ENCODE measurements at regions of chr2 and their contacts with region 1.

Region 1: GRCh38 chr2:95728878-95729596 is 137.2 kb downstream of the TRIM43 start:
- DNase-seq: peak; percentile 78
- H3K4me3 Mint-ChIP-seq: no peak overlapping the region
- H3K27ac Mint-ChIP-seq: peak overlapping the region; percentile 3
- H3K4me1 Mint-ChIP-seq: peaks cover 8% of the 10 kb centered on the region
- H3K27me3 Mint-ChIP-seq: peaks cover 31% of the 10 kb centered on the region
- CTCF ChIP-seq: peak; percentile 50

Region 2: GRCh38 chr2:95231723-95232122 is 497.3 kb before region 1 on chr2:
- CTCF ChIA-PET with region 1: no interaction called
- intact Hi-C with region 1: loop called (anchors 2 kb)
- DNase-seq: peak; percentile 75
- H3K4me3 Mint-ChIP-seq: no peak overlapping the region
- H3K27ac Mint-ChIP-seq: no peak overlapping the region
- H3K4me1 Mint-ChIP-seq: no peaks in the 10 kb centered on the region
- H3K27me3 Mint-ChIP-seq: no peaks in the 10 kb centered on the region
- CTCF ChIP-seq: peak; percentile 88

Region 3: GRCh38 chr2:95345566-95346230 is 383.3 kb before region 1 on chr2:
- CTCF ChIA-PET with region 1: no interaction called
- intact Hi-C with region 1: loop called (anchors 10 kb)
- DNase-seq: peak; percentile 93
- H3K4me3 Mint-ChIP-seq: peak overlapping the region; percentile 78
- H3K27ac Mint-ChIP-seq: no peak overlapping the region
- H3K4me1 Mint-ChIP-seq: peaks cover 8% of the 10 kb centered on the region
- H3K27me3 Mint-ChIP-seq: peaks cover 30% of the 10 kb centered on the region
- CTCF ChIP-seq: peak; percentile 85

Region 4: GRCh38 chr2:95526360-95527341 is 202.4 kb before region 1 on chr2:
- CTCF ChIA-PET with region 1: no interaction called
- intact Hi-C with region 1: loop called (anchors 5 kb)
- DNase-seq: peak; percentile 83
- H3K4me3 Mint-ChIP-seq: peak overlapping the region; percentile 94
- H3K27ac Mint-ChIP-seq: peak overlapping the region; percentile 99
- H3K4me1 Mint-ChIP-seq: peaks cover 22% of the 10 kb centered on the region
- H3K27me3 Mint-ChIP-seq: no peaks in the 10 kb centered on the region
- CTCF ChIP-seq: peak; percentile 16

Region 5: GRCh38 chr2:95568500-95568899 is 160.5 kb before region 1 on chr2:
- CTCF ChIA-PET with region 1: interaction called, 5 read pairs
- intact Hi-C with region 1: loop called (anchors 5 kb)
- DNase-seq: no peak
- H3K4me3 Mint-ChIP-seq: no peak overlapping the region
- H3K27ac Mint-ChIP-seq: no peak overlapping the region
- H3K4me1 Mint-ChIP-seq: peaks cover 22% of the 10 kb centered on the region
- H3K27me3 Mint-ChIP-seq: no peaks in the 10 kb centered on the region
- CTCF ChIP-seq: no peak

Region 6: GRCh38 chr2:95709831-95710230 is 19.2 kb before region 1 on chr2:
- CTCF ChIA-PET with region 1: no interaction called
- intact Hi-C with region 1: no loop called
- DNase-seq: no peak
- H3K4me3 Mint-ChIP-seq: no peak overlapping the region
- H3K27ac Mint-ChIP-seq: no peak overlapping the region
- H3K4me1 Mint-ChIP-seq: no peaks in the 10 kb centered on the region
- H3K27me3 Mint-ChIP-seq: no peaks in the 10 kb centered on the region
- CTCF ChIP-seq: no peak

Measured in Calu3 (cell line).